Posterior cingulate gyrus (tissue), 11 donors: ENCODE measurements at regions of chrX and their contacts with region 1.

Region 1: DNA sequence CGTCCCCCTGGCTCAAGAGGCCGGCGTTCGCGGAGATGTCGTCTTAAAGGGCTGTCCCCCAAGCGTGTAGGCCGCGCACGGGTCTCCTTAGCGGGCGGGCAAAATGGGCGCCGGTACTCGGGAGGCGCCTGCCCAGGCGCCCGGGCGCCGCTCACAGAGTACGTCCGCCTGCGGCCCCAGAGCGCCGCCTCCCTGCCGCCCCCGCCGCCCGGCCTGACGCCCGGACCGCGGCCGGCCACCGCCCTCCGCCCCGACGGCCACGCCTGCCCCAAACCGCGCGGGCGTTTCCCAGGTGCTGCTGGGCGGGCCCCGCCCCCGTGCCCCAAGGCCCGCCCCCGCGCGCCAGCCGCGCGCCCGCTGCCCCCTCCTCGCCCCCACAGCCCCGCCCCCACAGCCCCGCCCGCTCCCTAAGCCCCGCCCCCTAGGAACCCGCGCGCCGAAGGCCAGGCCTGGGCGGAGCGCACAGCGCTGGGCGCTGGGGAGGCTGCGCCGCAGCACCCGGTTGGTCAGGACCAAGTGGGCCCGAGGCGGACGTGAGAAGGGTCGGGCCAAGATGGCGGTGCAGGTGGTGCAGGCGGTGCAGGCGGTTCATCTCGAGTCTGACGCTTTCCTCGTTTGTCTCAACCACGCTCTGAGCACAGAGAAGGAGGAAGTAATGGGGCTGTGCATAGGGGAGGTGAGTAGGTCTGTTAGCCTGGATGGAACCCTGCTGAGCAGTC is at the starts of genes BRCC3, CMC4 and MTCP1:
- DNase-seq: peak; percentile 63 to 97 (median 76)

Region 2: GRCh38 chrX:155026726-155027508 is 44.2 kb before region 1 on chrX and contains the start of gene FUNDC2:
- intact Hi-C with region 1: loop called (anchors 5 kb)
- DNase-seq: peak; percentile 84 to 99 (median 90)